Activated B cell treated with CpG ODN at 0.5 μM for 24 hours (primary cell): ENCODE measurements at regions of chr19 and their contacts with region 1.

Region 1: DNA sequence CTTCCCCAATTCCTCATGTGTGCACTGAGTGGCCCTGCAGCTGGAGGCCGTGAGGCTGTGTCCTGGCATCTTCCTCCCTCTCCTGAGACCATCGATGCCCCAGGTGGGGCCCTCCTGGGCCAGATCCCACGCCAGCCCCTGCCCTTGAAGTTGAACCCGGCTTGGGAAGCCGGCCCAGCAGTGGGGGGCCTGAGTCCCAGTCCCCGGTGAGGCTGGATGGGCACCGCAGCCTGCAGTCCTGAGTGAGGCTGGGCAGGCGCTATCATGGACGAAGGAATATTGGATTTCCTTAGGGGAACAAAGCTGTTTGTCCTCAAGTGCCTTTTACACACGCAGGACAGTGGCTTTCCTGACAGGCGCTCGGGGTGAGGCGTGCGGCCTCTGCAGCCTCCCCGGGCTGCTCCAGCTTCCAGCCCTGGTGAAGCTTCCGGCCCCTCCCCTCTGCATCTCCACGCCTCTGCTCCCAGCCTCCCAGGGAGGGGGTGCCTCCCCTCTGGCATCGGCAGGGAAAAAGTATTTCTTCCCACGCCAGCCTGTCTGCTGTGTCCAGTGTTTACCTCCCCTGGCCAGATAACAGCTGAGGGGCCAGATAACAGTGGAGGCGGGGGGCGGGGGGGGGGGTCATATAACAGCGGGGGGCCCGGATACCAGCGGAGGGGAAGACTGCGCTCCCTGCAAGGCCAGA is 159.5 kb downstream of the KDM4B start:
- DNase-seq: no peak
- ATAC-seq: no peak
- H3K4me3 Mint-ChIP-seq: peak overlapping the region; percentile 77
- H3K27ac Mint-ChIP-seq: peak overlapping the region; percentile 91
- H3K4me1 Mint-ChIP-seq: peaks cover 87% of the 10 kb centered on the region
- H3K27me3 Mint-ChIP-seq: no peaks in the 10 kb centered on the region
- CTCF ChIP-seq: no peak

Region 2: DNA sequence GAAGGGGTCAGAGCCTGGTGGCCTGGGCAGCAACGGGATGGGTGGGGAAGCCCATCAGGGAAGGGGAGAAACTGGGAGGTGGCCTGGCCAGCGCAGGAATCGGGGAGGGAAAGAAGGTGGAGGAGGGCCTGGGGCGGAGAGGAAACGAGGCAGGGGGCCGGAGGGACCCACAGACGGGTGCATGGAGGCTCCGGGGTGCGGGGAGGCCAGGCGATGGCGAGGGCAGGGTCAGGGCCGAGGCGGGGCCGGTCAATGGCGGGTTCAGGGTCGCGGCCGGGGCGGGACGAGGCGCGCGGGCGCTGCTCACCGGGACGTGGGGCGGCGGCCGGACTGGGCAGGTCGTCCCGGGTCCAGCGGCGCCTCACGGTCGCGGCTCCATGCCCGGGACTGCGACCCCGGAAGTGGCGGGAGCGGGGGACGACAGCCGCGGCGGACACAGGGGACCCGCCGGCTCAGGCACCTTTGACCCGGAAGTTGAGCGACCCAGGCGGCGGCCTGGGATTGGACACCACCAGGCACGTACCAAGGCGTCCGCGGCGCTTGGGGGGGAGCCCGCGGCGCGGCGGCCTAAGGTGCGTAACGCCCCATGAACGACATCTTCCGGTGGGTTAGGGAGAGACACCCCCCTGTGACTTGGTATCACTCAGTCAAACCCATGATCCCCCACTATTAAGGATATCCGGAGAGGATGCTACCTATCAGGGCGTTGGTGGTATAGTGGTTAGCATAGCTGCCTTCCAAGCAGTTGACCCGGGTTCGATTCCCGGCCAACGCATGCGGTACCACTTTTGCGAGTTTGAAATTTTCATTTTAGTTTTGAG is 404.8 kb before region 1 on chr19 and contains the start of gene DPP9:
- CTCF ChIA-PET with region 1: no interaction called
- POLR2A ChIA-PET with region 1: no interaction called
- intact Hi-C with region 1: loop called (anchors 1 kb)
- DNase-seq: peak; percentile 92
- ATAC-seq: peak; percentile 94
- H3K4me3 Mint-ChIP-seq: peak within 1 kb of the TSS; percentile 98
- H3K27ac Mint-ChIP-seq: peak within 1 kb of the TSS; percentile 98
- H3K4me1 Mint-ChIP-seq: peaks cover 46% of the 10 kb centered on the region
- H3K27me3 Mint-ChIP-seq: peaks cover 7% of the 10 kb centered on the region
- CTCF ChIP-seq: no peak
- total RNA-seq, gene DPP9: 85.7 and 111 TPM in 2 replicates

Region 3: DNA sequence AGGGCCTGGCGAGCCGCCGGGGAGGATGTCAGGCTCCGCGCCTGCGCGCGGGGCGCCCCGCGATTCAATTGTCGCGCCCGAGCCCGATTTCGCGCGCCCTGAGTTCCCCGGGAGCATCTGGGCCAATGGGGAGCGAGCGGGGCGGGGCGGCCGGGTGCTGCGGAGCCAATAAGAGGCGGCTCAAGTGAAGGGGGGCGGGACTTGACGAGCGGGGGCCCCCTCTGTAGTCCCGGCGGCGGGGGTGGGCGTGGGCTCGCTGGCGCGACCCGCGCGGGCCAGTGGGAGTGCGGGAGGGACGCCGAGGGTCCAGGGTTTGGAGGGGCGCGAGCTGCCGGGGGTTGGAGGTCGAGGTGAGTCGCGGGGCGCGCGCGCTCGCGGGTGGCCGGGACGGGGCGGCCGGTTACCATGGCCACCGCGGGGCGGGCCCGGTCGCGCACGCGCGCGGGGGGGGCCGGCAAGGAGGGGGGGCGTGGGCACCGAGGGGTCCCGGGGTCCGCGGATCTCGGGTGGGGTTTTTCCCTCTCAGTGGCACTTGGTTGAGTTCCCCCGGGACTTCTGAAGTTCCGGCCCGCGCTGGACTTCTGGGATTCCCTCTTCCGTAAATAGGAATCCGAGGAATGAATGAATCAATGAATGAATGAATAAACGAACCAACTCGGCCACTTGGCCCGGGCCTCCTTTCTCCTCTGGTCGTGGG is 218.3 kb before region 1 on chr19:
- CTCF ChIA-PET with region 1: no interaction called
- POLR2A ChIA-PET with region 1: no interaction called
- intact Hi-C with region 1: loop called (anchors 5 kb)
- DNase-seq: peak; percentile 94
- ATAC-seq: peak; percentile 96
- H3K4me3 Mint-ChIP-seq: peak overlapping the region; percentile 82
- H3K27ac Mint-ChIP-seq: peak overlapping the region; percentile 35
- H3K4me1 Mint-ChIP-seq: peaks cover 56% of the 10 kb centered on the region
- H3K27me3 Mint-ChIP-seq: no peaks in the 10 kb centered on the region
- CTCF ChIP-seq: no peak

Region 4: GRCh38 chr19:5048091-5048726 is 80.2 kb before region 1 on chr19:
- CTCF ChIA-PET with region 1: interaction called, 9 read pairs
- POLR2A ChIA-PET with region 1: interaction called, 21 read pairs
- intact Hi-C with region 1: loop called (anchors 1 kb)
- DNase-seq: peak; percentile 66
- ATAC-seq: peak; percentile 90
- H3K4me3 Mint-ChIP-seq: no peak overlapping the region
- H3K27ac Mint-ChIP-seq: no peak overlapping the region
- H3K4me1 Mint-ChIP-seq: peaks cover 22% of the 10 kb centered on the region
- H3K27me3 Mint-ChIP-seq: no peaks in the 10 kb centered on the region
- CTCF ChIP-seq: peak; percentile 63

Region 5: GRCh38 chr19:5138606-5139582 is 10.5 kb after region 1 on chr19:
- CTCF ChIA-PET with region 1: interaction called, 3 read pairs
- POLR2A ChIA-PET with region 1: interaction called, 55 read pairs
- intact Hi-C with region 1: loop called (anchors 1 kb)
- DNase-seq: peak; percentile 73
- ATAC-seq: peak; percentile 64
- H3K4me3 Mint-ChIP-seq: peak overlapping the region; percentile 70
- H3K27ac Mint-ChIP-seq: peak overlapping the region; percentile 85
- H3K4me1 Mint-ChIP-seq: peaks cover 86% of the 10 kb centered on the region
- H3K27me3 Mint-ChIP-seq: no peaks in the 10 kb centered on the region
- CTCF ChIP-seq: no peak

Region 6: GRCh38 chr19:5622463-5623396 is 494.3 kb after region 1 on chr19 and contains the starts of genes SAFB and SAFB2:
- CTCF ChIA-PET with region 1: no interaction called
- POLR2A ChIA-PET with region 1: interaction called, 6 read pairs
- intact Hi-C with region 1: loop called (anchors 2 kb)
- DNase-seq: peak; percentile 98
- ATAC-seq: peak; percentile 79
- H3K4me3 Mint-ChIP-seq: peak within 1 kb of the TSS; percentile 100
- H3K27ac Mint-ChIP-seq: peak within 1 kb of the TSS; percentile 99
- H3K4me1 Mint-ChIP-seq: peaks cover 77% of the 10 kb centered on the region
- H3K27me3 Mint-ChIP-seq: peaks cover 2% of the 10 kb centered on the region
- CTCF ChIP-seq: no peak
- total RNA-seq, gene SAFB: 162 and 171 TPM in 2 replicates
- total RNA-seq, gene SAFB2: 123 and 143 TPM in 2 replicates

Region 7: DNA sequence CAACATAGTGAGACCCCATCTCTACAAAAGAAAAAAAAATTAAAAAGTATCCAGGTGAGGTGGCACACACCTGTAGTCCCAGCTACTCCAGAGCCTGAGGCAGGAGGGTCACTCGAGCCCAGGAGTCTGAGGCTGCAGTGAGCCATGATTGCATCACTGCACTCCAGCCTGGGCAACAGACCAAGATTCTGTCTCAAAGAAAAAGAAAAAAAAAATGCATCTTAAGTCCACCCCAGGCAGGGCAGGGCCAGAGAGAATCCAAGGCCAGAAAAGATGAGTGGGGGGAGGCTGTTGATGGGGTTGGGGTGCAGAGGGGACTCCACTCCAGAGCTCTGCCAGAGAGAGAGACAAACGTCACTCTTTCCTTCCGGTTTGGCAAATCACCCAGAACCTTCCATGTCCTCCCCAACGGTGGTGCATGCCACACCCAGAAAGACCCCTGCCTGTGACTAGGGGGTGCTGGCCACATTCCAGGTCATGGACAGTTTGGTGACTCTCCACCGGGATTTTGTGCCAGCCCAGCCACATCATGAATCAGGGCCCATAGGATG is 722.4 kb after region 1 on chr19:
- CTCF ChIA-PET with region 1: no interaction called
- POLR2A ChIA-PET with region 1: no interaction called
- intact Hi-C with region 1: no loop called
- DNase-seq: no peak
- ATAC-seq: no peak
- H3K4me3 Mint-ChIP-seq: no peak overlapping the region
- H3K27ac Mint-ChIP-seq: no peak overlapping the region
- H3K4me1 Mint-ChIP-seq: no peaks in the 10 kb centered on the region
- H3K27me3 Mint-ChIP-seq: peaks cover 7% of the 10 kb centered on the region
- CTCF ChIP-seq: no peak

Region 8: DNA sequence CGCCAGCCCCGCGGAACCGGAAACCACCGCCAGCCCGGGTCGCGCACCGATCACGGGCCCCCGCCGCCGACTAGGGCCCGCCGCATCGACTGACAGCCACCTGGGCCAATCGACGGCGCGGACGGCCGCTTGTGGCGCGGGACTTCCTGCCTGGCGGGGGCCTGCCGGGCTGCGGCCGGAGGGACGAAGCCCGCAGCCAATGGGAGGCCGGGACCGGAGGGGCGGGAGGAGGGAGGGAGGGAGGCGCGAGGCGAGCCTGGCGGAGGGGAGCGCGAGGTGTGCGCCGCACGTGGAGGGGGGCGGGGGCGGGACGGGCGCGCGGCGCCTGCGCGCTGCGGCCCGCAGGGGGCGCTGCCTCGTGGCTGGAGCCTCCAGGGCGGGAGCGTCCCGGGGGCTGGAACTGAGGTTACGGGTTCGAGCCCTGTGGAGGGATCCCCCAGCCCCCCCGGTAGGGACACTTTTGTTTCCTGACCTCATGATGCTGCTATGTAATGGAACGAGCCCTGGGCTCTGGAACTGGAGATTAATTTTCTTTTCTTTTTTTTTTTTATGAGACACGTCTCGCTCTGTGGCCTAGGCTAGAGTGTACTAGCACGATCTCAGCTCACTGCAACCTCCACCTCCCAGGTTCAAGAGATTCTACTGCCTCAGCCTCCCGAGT is 1151.7 kb after region 1 on chr19 and contains the start of gene MLLT1:
- CTCF ChIA-PET with region 1: no interaction called
- POLR2A ChIA-PET with region 1: no interaction called
- intact Hi-C with region 1: no loop called
- DNase-seq: peak; percentile 95
- ATAC-seq: peak; percentile 95
- H3K4me3 Mint-ChIP-seq: peak within 1 kb of the TSS; percentile 88
- H3K27ac Mint-ChIP-seq: peak within 1 kb of the TSS; percentile 68
- H3K4me1 Mint-ChIP-seq: peaks cover 35% of the 10 kb centered on the region
- H3K27me3 Mint-ChIP-seq: no peaks in the 10 kb centered on the region
- CTCF ChIP-seq: peak; percentile 36
- total RNA-seq, gene MLLT1: 39.0 and 41.3 TPM in 2 replicates